ENCODE measurements at regions of chr17 and their contacts with region 1.

Region 1: DNA sequence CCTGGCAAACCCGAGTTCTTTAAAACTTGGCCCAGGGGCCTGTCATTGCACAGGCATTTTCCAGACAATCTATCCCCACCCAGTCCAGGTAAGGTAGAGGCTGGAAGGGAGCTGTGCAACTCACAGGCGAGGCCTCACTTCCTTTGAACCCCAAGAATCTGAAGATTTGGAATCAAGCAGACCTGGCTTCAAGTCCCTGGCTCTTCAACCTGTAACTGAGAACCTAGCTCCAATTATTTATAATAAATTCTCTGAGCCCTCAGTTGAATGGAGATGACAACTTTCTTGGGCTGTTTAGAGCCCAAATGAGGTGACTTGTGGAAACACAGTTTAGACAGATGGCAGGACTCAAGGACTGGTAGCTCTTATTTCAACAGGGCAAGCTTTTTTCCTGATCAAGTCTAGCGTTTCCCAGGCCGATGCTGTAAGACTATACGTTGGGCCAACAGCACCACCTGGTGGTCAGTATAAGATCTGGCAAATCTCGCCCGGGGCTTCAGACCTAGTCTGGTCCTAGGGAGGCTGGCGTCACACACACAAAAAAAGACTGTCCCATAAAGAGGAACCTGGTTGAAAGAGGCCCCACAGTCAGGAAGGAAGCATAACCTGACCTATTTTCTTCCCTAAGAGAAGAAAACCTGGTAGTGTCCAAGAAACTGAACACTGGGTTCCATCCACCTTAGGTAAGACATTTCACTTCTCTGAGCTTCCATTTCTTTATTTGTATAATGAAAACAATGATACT is 117.9 kb downstream of the C17orf67 start:
- DNase-seq: peak; percentile 75 to 88
- H3K4me3 ChIP-seq: no peak overlapping the region
- H3K4me1 ChIP-seq: no peaks in the 10 kb centered on the region; the same call in 1 of the 2 replicates
- H3K27me3 ChIP-seq: no peaks in the 10 kb centered on the region

Region 2: DNA sequence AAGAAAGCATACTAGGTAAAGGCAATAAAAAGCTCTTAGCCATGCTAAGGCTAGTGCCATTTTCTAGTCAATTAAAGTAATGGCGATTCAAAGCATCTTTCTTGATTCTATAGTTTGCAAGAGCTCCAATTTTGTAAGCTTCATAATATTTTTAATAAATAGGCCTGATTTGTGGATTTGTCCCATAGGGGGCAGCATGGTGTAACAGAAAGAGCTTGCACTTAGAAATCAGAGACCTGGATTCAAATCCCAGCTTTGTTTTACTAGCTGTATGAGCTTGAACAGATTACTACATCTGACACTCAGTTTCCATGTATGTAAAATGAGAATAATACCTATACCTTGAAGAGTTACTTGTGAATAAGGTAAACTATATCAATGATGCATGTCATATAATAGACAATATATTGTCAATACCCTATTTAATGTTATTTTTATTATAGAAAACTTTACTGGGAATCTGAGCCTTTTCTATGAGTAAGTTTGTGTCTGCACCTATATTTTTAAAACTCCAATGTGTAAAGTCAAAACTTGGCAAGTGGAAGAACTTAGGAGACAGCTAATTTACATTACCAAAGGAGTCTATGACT is 215.9 kb before region 1 on chr17:
- in situ Hi-C with region 1: loop called (anchors 10 kb)
- DNase-seq: peak; percentile 14 to 62
- H3K4me3 ChIP-seq: no peak overlapping the region
- H3K4me1 ChIP-seq: no peaks in the 10 kb centered on the region
- H3K27me3 ChIP-seq: 0 out of 2 replicates have a peak, but pooled peaks cover 2% of the 10 kb centered on the region

Region 3: DNA sequence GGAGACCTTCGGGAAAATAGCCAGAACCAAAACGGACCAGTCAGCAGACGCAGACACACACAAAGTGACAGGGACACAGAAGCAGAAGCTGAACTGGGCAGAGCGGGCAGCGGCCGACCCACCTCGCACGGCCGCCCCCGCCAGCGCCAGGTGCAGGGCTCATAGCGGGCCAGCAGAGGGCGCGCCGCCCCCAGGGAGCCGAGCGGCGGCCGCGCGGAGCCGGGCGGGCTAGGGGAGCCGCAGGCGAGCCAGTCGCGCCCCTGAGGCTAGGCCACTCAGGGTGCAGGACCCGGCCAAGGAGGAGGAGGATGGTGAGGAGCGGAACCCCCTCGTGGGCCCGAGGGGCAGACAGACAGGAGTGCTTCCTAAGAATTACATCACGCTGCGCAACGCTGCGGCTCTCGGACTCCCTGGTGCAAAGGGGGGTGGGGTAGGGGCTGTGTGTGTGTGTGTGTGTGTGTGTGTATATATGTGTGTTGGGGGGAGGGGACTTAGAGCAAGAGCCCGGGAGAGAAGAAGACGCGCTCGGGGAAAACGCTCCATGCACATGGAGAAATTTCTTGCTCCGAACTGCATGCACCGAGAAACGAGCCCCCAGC is 123.2 kb before region 1 on chr17:
- in situ Hi-C with region 1: loop called (anchors 10 kb)
- DNase-seq: peak; percentile 55 to 82
- H3K4me3 ChIP-seq: peak overlapping the region; percentile 63
- H3K4me1 ChIP-seq: peaks cover 11% of the 10 kb centered on the region
- H3K27me3 ChIP-seq: no peaks in the 10 kb centered on the region